ENCODE measurements at regions of chr10 and their contacts with region 1.

Region 1: GRCh38 chr10:79468024-79468560 is 22.7 kb upstream of the ZCCHC24 start:
- DNase-seq: no peak
- ATAC-seq: no peak
- H3K4me3 ChIP-seq: no peak overlapping the region
- H3K4me3 Mint-ChIP-seq: no peak overlapping the region
- H3K27ac ChIP-seq: no peak overlapping the region
- H3K27ac Mint-ChIP-seq: no peak overlapping the region
- H3K4me1 ChIP-seq: no peaks in the 10 kb centered on the region
- H3K4me1 Mint-ChIP-seq: no peaks in the 10 kb centered on the region
- H3K27me3 ChIP-seq: peaks cover 0 to 4% of the 10 kb centered on the region in 2 experiments
- H3K27me3 Mint-ChIP-seq: peaks cover 5 to 12% of the 10 kb centered on the region in 2 donors

Region 2: GRCh38 chr10:79310911-79311573 is 157.1 kb before region 1 on chr10:
- CTCF ChIA-PET with region 1: no interaction called
- POLR2A ChIA-PET with region 1: no interaction called
- DNase-seq: no peak
- ATAC-seq: no peak
- H3K4me3 ChIP-seq: no peak overlapping the region
- H3K4me3 Mint-ChIP-seq: no peak overlapping the region
- H3K27ac ChIP-seq: no peak overlapping the region
- H3K27ac Mint-ChIP-seq: no peak overlapping the region
- H3K4me1 ChIP-seq: peaks cover 0 to 4% of the 10 kb centered on the region in 2 experiments
- H3K4me1 Mint-ChIP-seq: peaks cover 4 to 9% (median 5%) of the 10 kb centered on the region in 3 donors
- H3K27me3 ChIP-seq: no peaks in the 10 kb centered on the region
- H3K27me3 Mint-ChIP-seq: no peaks in the 10 kb centered on the region

Region 3: GRCh38 chr10:79374312-79375191 is 93.5 kb before region 1 on chr10:
- CTCF ChIA-PET with region 1: interaction called, 15 to 22 read pairs
- POLR2A ChIA-PET with region 1: no interaction called
- DNase-seq: peak; percentile 22 to 81 (median 65)
- ATAC-seq: peak; percentile 55 to 75 (median 62)
- H3K4me3 ChIP-seq: no peak overlapping the region
- H3K4me3 Mint-ChIP-seq: no peak overlapping the region
- H3K27ac ChIP-seq: no peak overlapping the region
- H3K27ac Mint-ChIP-seq: no peak overlapping the region
- H3K4me1 ChIP-seq: peaks cover 0 to 4% of the 10 kb centered on the region in 2 experiments
- H3K4me1 Mint-ChIP-seq: peaks cover 3 to 6% (median 4%) of the 10 kb centered on the region in 3 donors
- H3K27me3 ChIP-seq: peaks cover 0 to under 1% of the 10 kb centered on the region in 2 experiments
- H3K27me3 Mint-ChIP-seq: peaks cover 0 to 2% of the 10 kb centered on the region in 2 donors

Region 4: GRCh38 chr10:79434223-79434687 is 33.8 kb before region 1 on chr10:
- CTCF ChIA-PET with region 1: no interaction called
- POLR2A ChIA-PET with region 1: no interaction called
- DNase-seq: no peak
- ATAC-seq: no peak
- H3K4me3 ChIP-seq: no peak overlapping the region
- H3K4me3 Mint-ChIP-seq: no peak overlapping the region
- H3K27ac ChIP-seq: no peak overlapping the region
- H3K27ac Mint-ChIP-seq: no peak overlapping the region
- H3K4me1 ChIP-seq: no peaks in the 10 kb centered on the region
- H3K4me1 Mint-ChIP-seq: no peaks in the 10 kb centered on the region
- H3K27me3 ChIP-seq: peaks cover 0 to 17% of the 10 kb centered on the region in 2 experiments
- H3K27me3 Mint-ChIP-seq: no peaks in the 10 kb centered on the region

Region 5: DNA sequence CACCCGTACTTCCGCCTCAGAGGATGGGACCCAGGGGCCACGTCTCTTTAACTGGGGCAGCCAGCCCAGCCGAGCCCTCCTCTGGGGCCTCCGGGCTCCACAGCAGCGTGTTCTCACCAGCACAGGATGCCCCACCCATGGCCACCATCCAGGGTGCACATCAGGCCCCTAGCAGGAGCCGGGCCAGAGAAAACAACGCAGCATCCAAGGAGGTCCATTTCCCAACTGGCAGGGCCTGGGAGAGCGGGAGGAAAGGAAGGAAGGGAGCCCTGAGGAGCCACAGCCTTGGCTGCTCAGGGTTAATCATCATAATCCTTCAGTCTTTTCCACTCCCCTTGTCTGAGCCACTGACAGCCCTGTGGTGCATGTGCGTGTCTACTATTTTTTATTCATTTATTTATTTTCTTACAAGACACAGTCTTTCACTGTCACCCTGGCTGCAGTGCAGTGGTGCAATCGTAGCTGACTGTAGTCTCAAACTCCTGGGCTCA is 668.0 kb after region 1 on chr10:
- CTCF ChIA-PET with region 1: interaction called in 1 of 2 experiments, 12 read pairs
- POLR2A ChIA-PET with region 1: no interaction called
- DNase-seq: no peak
- ATAC-seq: no peak
- H3K4me3 ChIP-seq: no peak overlapping the region
- H3K4me3 Mint-ChIP-seq: no peak overlapping the region
- H3K27ac ChIP-seq: no peak overlapping the region
- H3K27ac Mint-ChIP-seq: no peak overlapping the region
- H3K4me1 ChIP-seq: peaks cover 0 to 5% of the 10 kb centered on the region in 2 experiments
- H3K4me1 Mint-ChIP-seq: peaks cover 3 to 8% (median 7%) of the 10 kb centered on the region in 3 donors
- H3K27me3 ChIP-seq: peaks cover 6 to 62% of the 10 kb centered on the region in 2 experiments
- H3K27me3 Mint-ChIP-seq: peaks cover 28 to 59% of the 10 kb centered on the region in 2 donors

Region 6: GRCh38 chr10:80168679-80169380 is 700.7 kb after region 1 on chr10:
- CTCF ChIA-PET with region 1: no interaction called
- POLR2A ChIA-PET with region 1: no interaction called
- DNase-seq: peak in 10 of 35 experiments; percentile 5 to 46 (median 19)
- ATAC-seq: peak in 3 of 4 experiments; percentile 20 to 45 (median 38)
- H3K4me3 ChIP-seq: no peak overlapping the region
- H3K4me3 Mint-ChIP-seq: no peak overlapping the region
- H3K27ac ChIP-seq: no peak overlapping the region
- H3K27ac Mint-ChIP-seq: no peak overlapping the region
- H3K4me1 ChIP-seq: peaks cover 0 to 27% of the 10 kb centered on the region in 2 experiments
- H3K4me1 Mint-ChIP-seq: peaks cover 9 to 18% (median 18%) of the 10 kb centered on the region in 3 donors
- H3K27me3 ChIP-seq: no peaks in the 10 kb centered on the region
- H3K27me3 Mint-ChIP-seq: no peaks in the 10 kb centered on the region